ENCODE measurements at regions of chr2 and their contacts with region 1.

Region 1: GRCh38 chr2:148874868-148875341 is at the start of gene KIF5C:
- DNase-seq: peak; percentile 95
- H3K4me3 ChIP-seq: peak within 1 kb of the TSS; percentile 74
- H3K27ac ChIP-seq: no peak within 1 kb of the TSS
- H3K4me1 ChIP-seq: peaks cover 18% of the 10 kb centered on the region
- CTCF ChIP-seq: no peak
- total RNA-seq, gene KIF5C: 8.1 and 15.2 TPM in 2 replicates

Region 2: DNA sequence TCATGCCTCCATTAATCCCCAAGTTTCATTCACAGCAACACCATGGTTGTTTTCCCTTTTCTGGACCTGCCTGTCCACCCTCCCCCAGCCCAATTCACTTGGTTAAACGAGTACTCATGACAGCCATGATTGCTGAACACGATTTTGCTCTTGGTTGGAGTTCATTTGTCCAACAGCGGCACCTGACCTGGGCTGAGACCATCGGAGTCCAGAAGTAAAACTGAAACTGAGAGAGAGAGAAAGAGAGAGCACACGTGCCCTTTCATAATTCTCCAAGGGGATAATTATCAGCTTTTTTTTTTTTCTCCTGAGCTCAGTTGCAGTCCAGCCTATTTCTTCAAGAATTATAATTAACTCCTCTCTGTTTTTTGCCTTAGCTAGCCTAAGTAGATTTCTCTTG is 13.5 kb before region 1 on chr2:
- CTCF ChIA-PET with region 1: no interaction called
- POLR2A ChIA-PET with region 1: interaction called, 11 read pairs
- intact Hi-C with region 1: no loop called
- DNase-seq: no peak
- H3K4me3 ChIP-seq: no peak overlapping the region
- H3K27ac ChIP-seq: no peak overlapping the region
- H3K4me1 ChIP-seq: no peaks in the 10 kb centered on the region
- CTCF ChIP-seq: no peak

Region 3: GRCh38 chr2:149587220-149587949 is 712.5 kb after region 1 on chr2 and contains the start of gene MMADHC:
- CTCF ChIA-PET with region 1: no interaction called
- POLR2A ChIA-PET with region 1: no interaction called
- intact Hi-C with region 1: loop called (anchors 5 kb)
- DNase-seq: peak; percentile 97
- H3K4me3 ChIP-seq: peak within 1 kb of the TSS; percentile 94
- H3K27ac ChIP-seq: peak within 1 kb of the TSS; percentile 88
- H3K4me1 ChIP-seq: peaks cover 20% of the 10 kb centered on the region
- CTCF ChIP-seq: no peak
- total RNA-seq, gene MMADHC: 68.5 and 73.6 TPM in 2 replicates

Measured in OCI-LY7 (cell line).